Naive thymus-derived CD4-positive, alpha-beta T cell (primary cell): ENCODE measurements at regions of chr19 and their contacts with region 1.

Region 1: GRCh38 chr19:21505459-21506451 is at the start of gene ZNF429:
- DNase-seq: peak; percentile 64 to 94 (median 90)
- ATAC-seq: peak; percentile 100
- H3K4me3 ChIP-seq: peak within 1 kb of the TSS; percentile 100
- H3K4me3 Mint-ChIP-seq: peak within 1 kb of the TSS; percentile 97 to 100 (median 100)
- H3K27ac ChIP-seq: peak within 1 kb of the TSS; percentile 94
- H3K27ac Mint-ChIP-seq: peak within 1 kb of the TSS; percentile 98 to 100 (median 99)
- H3K4me1 ChIP-seq: peaks cover 16 to 27% of the 10 kb centered on the region in 2 donors
- H3K4me1 Mint-ChIP-seq: peaks cover 8 to 56% (median 50%) of the 10 kb centered on the region in 7 donors
- H3K27me3 ChIP-seq: no peaks in the 10 kb centered on the region
- H3K27me3 Mint-ChIP-seq: no peaks in the 10 kb centered on the region
- total RNA-seq, gene ZNF429: 6.4 to 30.7 (median 25.0) TPM

Region 2: DNA sequence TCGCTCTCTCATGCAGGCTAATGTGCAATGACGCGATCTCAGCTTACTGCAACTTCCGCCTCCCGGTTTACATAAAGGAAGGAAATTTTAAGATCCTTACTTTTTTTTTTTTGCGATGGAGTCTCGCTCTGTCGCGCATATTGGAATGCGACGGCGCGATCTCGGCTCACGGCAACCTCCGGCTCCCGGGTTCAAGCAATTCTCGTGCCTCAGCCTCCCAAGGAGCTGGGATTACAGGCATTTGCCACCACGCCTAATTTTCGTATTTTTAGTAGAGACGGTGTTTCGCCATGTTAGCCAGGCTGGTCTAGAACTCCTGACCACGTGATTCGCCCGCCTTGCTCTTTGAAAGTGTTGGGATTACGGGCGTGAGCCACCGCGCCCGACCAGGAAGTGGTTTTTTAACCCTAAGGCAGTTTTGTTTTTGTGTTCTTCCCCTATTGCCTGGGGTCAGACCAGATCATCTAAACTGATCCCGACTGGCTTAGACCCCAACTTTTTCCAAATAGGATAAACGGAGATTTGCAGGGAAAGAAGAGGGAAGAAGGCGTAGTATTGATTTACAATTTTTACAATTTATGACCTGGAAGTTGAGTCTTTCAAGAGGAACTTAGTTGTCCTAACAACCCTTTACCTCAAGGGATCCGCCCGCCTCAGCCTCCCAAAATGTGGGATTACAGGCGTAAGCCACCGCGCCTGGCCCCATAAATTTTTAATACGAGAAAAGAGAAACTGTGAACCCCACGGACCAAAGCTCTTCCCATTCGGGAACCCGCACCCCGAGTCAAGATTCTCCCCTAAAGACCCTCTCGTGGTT is 1082.2 kb before region 1 on chr19:
- CTCF ChIA-PET with region 1: no interaction called
- POLR2A ChIA-PET with region 1: interaction called, 4 read pairs
- intact Hi-C with region 1: loop called in 1 of 2 experiments (anchors 2 kb)
- DNase-seq: peak in 7 of 9 donors; percentile 17 to 30 (median 24)
- ATAC-seq: no peak
- H3K4me3 ChIP-seq: peak overlapping the region; percentile 91
- H3K4me3 Mint-ChIP-seq: peak overlapping the region; percentile 89 to 98 (median 93)
- H3K27ac ChIP-seq: peak overlapping the region; percentile 72
- H3K27ac Mint-ChIP-seq: peak overlapping the region; percentile 51 to 96 (median 89)
- H3K4me1 ChIP-seq: peaks cover 0 to 3% of the 10 kb centered on the region in 2 donors
- H3K4me1 Mint-ChIP-seq: peaks cover 4 to 29% (median 16%) of the 10 kb centered on the region in 7 donors
- H3K27me3 ChIP-seq: no peaks in the 10 kb centered on the region
- H3K27me3 Mint-ChIP-seq: no peaks in the 10 kb centered on the region

Region 3: DNA sequence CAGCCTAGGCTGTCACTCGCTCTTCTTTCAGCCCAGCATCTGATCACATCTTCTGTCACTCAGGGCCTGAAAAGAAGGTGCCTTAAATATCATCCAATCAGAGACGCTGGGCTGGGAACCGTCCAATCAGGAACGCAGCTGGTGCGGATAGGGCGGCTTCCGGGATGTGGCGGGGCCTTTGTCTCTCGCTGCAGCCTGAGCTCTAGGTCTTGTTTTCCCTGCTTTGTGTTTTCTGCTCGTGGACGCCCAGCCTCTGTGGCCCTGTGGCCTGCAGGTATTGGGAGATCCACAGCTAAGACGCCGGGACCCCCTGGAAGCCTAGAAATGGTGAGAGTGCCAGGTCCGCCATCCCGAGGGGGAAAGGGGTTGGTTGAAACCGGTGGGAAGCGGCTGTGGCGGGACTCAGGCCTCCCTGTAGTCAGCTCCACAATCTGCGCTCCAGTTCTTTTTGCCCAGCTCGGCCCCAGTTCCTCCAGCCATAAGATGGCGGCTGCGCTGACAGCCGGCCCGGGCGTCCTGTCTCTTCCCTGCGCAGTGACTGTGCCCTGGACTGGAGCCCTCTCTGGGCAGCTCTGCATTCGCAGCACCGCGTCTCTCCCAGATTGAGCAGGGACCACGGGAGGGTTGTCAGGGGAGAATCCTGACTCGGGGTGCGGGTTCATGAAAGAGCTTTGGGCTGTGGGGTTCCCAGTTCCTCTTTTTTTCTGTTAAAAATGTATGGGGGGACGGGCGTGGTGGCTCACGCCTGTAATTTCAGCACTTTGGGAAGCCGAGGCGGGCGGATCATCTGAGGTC is 582.5 kb before region 1 on chr19 and contains the start of gene ZNF85:
- CTCF ChIA-PET with region 1: no interaction called
- POLR2A ChIA-PET with region 1: interaction called, 5 read pairs
- intact Hi-C with region 1: loop called (anchors 5 to 10 kb)
- DNase-seq: peak; percentile 69 to 95 (median 92)
- ATAC-seq: peak; percentile 99
- H3K4me3 ChIP-seq: peak within 1 kb of the TSS; percentile 66
- H3K4me3 Mint-ChIP-seq: peak within 1 kb of the TSS; percentile 92 to 98 (median 95)
- H3K27ac ChIP-seq: peak within 1 kb of the TSS; percentile 63
- H3K27ac Mint-ChIP-seq: peak within 1 kb of the TSS; percentile 87 to 98 (median 93)
- H3K4me1 ChIP-seq: peaks cover 0 to 4% of the 10 kb centered on the region in 2 donors
- H3K4me1 Mint-ChIP-seq: peaks cover 4 to 28% (median 14%) of the 10 kb centered on the region in 7 donors
- H3K27me3 ChIP-seq: no peaks in the 10 kb centered on the region
- H3K27me3 Mint-ChIP-seq: no peaks in the 10 kb centered on the region
- total RNA-seq, gene ZNF85: 4.3 to 10.4 (median 7.3) TPM

Region 4: GRCh38 chr19:21328885-21329605 is 176.7 kb before region 1 on chr19 and contains the start of gene ZNF708:
- CTCF ChIA-PET with region 1: no interaction called
- POLR2A ChIA-PET with region 1: interaction called, 25 read pairs
- intact Hi-C with region 1: loop called (anchors 1 to 10 kb)
- DNase-seq: peak; percentile 42 to 80 (median 71)
- ATAC-seq: peak; percentile 99
- H3K4me3 ChIP-seq: peak within 1 kb of the TSS; percentile 94
- H3K4me3 Mint-ChIP-seq: peak within 1 kb of the TSS; percentile 93 to 99 (median 97)
- H3K27ac ChIP-seq: peak within 1 kb of the TSS; percentile 92
- H3K27ac Mint-ChIP-seq: peak within 1 kb of the TSS; percentile 96 to 100 (median 99)
- H3K4me1 ChIP-seq: peaks cover 6 to 14% of the 10 kb centered on the region in 2 donors
- H3K4me1 Mint-ChIP-seq: peaks cover 24 to 47% (median 31%) of the 10 kb centered on the region in 7 donors
- H3K27me3 ChIP-seq: no peaks in the 10 kb centered on the region
- H3K27me3 Mint-ChIP-seq: no peaks in the 10 kb centered on the region
- total RNA-seq, gene ZNF708: 21.2 to 48.0 (median 24.2) TPM

Region 5: GRCh38 chr19:21568816-21569493 is 63.2 kb after region 1 on chr19:
- CTCF ChIA-PET with region 1: interaction called, 8 read pairs
- POLR2A ChIA-PET with region 1: interaction called, 62 read pairs
- intact Hi-C with region 1: loop called (anchors 1 kb)
- DNase-seq: peak; percentile 54 to 94 (median 89)
- ATAC-seq: peak; percentile 99
- H3K4me3 ChIP-seq: peak overlapping the region; percentile 64
- H3K4me3 Mint-ChIP-seq: peak overlapping the region; percentile 85 to 99 (median 94)
- H3K27ac ChIP-seq: peak overlapping the region; percentile 71
- H3K27ac Mint-ChIP-seq: peak overlapping the region; percentile 94 to 99 (median 96)
- H3K4me1 ChIP-seq: no peaks in the 10 kb centered on the region
- H3K4me1 Mint-ChIP-seq: peaks cover 0 to 44% (median 24%) of the 10 kb centered on the region in 7 donors
- H3K27me3 ChIP-seq: no peaks in the 10 kb centered on the region
- H3K27me3 Mint-ChIP-seq: no peaks in the 10 kb centered on the region

Region 6: GRCh38 chr19:21698215-21698614 is 192.5 kb after region 1 on chr19:
- CTCF ChIA-PET with region 1: no interaction called
- POLR2A ChIA-PET with region 1: interaction called, 4 read pairs
- intact Hi-C with region 1: loop called in 1 of 2 experiments (anchors 1 kb)
- DNase-seq: peak in 5 of 9 donors; percentile 40 to 57 (median 45)
- ATAC-seq: peak; percentile 72
- H3K4me3 ChIP-seq: no peak overlapping the region
- H3K4me3 Mint-ChIP-seq: no peak overlapping the region
- H3K27ac ChIP-seq: no peak overlapping the region
- H3K27ac Mint-ChIP-seq: no peak overlapping the region
- H3K4me1 ChIP-seq: no peaks in the 10 kb centered on the region
- H3K4me1 Mint-ChIP-seq: no peaks in the 10 kb centered on the region
- H3K27me3 ChIP-seq: no peaks in the 10 kb centered on the region
- H3K27me3 Mint-ChIP-seq: peaks cover 0 to 4% (median 0%) of the 10 kb centered on the region in 5 donors

Region 7: GRCh38 chr19:23273590-23274413 is 1768.0 kb after region 1 on chr19:
- CTCF ChIA-PET with region 1: no interaction called
- POLR2A ChIA-PET with region 1: interaction called, 3 read pairs
- intact Hi-C with region 1: loop called in 1 of 2 experiments (anchors 10 kb)
- DNase-seq: peak; percentile 76 to 93 (median 91)
- ATAC-seq: peak; percentile 100
- H3K4me3 ChIP-seq: peak overlapping the region; percentile 94
- H3K4me3 Mint-ChIP-seq: peak overlapping the region; percentile 94 to 99 (median 98)
- H3K27ac ChIP-seq: peak overlapping the region; percentile 95
- H3K27ac Mint-ChIP-seq: peak overlapping the region; percentile 92 to 98 (median 96)
- H3K4me1 ChIP-seq: peaks cover 0 to 7% of the 10 kb centered on the region in 2 donors
- H3K4me1 Mint-ChIP-seq: peaks cover 15 to 47% (median 30%) of the 10 kb centered on the region in 7 donors
- H3K27me3 ChIP-seq: no peaks in the 10 kb centered on the region
- H3K27me3 Mint-ChIP-seq: no peaks in the 10 kb centered on the region